ENCODE measurements at regions of chr1 and their contacts with region 1.

Region 1: GRCh38 chr1:227999056-227999930 is 7.5 kb upstream of the WNT3A start:
- DNase-seq: peak; percentile 15 to 76 (median 62)
- ATAC-seq: peak; percentile 84 to 98 (median 88)
- H3K4me3 ChIP-seq: no peak overlapping the region
- H3K4me3 Mint-ChIP-seq: no peak overlapping the region
- H3K27ac ChIP-seq: no peak overlapping the region
- H3K27ac Mint-ChIP-seq: no peak overlapping the region
- H3K4me1 ChIP-seq: no peaks in the 10 kb centered on the region
- H3K4me1 Mint-ChIP-seq: peaks cover 0 to 1% (median under 1%) of the 10 kb centered on the region in 3 donors
- H3K27me3 ChIP-seq: peaks cover 0 to 47% of the 10 kb centered on the region in 2 experiments
- H3K27me3 Mint-ChIP-seq: peaks cover 23 to 47% of the 10 kb centered on the region in 2 donors

Region 2: DNA sequence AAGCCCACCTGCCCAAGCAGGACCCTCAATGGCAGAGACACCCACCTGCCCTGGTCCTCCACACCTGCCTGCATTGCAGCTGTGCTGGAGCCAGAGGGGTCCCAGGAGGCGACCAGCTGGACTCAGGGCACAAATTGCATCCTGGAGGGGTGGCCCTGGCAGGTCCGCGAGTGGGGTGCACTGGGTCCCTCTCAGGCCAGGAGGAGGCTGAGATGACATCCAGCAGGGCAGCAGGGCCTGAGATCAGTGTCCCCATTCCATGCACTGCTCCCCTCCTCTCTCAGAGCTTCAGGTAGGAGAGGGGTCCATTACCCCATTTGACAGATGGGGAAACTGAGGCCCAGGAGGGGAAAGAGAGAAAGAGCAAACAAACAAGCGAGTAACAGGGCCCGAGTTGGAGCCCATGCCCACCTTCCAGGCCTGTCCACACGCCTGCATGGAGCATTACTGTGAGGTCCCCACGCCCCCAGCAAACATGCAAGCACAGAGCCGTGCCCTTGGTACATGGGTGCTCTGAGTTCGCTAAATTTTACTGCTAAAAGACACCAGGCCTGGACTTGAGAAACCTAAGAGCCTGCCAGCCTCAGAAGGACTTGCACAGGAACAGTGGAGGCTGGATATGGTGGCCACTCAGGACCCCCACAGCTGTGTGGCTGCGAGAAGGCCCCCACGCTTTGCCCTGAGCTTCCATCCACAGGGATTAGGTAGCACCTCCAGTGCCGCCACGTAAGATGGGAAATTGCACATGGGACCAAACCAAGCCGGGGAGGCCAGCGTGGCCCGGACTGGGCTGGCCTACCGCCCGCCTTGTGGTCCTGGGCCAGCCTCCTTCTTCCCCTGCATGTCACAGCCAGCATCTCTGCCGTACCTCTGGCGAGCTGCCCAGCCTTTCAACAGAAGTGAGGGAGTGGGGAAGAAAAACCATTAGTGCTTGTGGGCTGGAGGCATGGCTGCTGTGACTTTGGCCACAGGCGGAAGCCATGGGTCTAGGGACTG is 14.9 kb after region 1 on chr1:
- CTCF ChIA-PET with region 1: no interaction called
- POLR2A ChIA-PET with region 1: no interaction called
- DNase-seq: peak in 3 of 35 experiments; percentile 3 to 13 (median 7)
- ATAC-seq: no peak
- H3K4me3 ChIP-seq: no peak overlapping the region
- H3K4me3 Mint-ChIP-seq: no peak overlapping the region
- H3K27ac ChIP-seq: no peak overlapping the region
- H3K27ac Mint-ChIP-seq: no peak overlapping the region
- H3K4me1 ChIP-seq: peaks cover 0 to 6% of the 10 kb centered on the region in 2 experiments
- H3K4me1 Mint-ChIP-seq: peaks cover 0 to 10% (median under 1%) of the 10 kb centered on the region in 3 donors
- H3K27me3 ChIP-seq: peaks cover 0 to 49% of the 10 kb centered on the region in 2 experiments
- H3K27me3 Mint-ChIP-seq: peaks cover 20 to 27% of the 10 kb centered on the region in 2 donors

Region 3: GRCh38 chr1:228136901-228137300 is 137.6 kb after region 1 on chr1:
- CTCF ChIA-PET with region 1: no interaction called
- POLR2A ChIA-PET with region 1: no interaction called
- DNase-seq: peak in 2 of 35 experiments; percentile 26 to 61
- ATAC-seq: no peak
- H3K4me3 ChIP-seq: no peak overlapping the region
- H3K4me3 Mint-ChIP-seq: no peak overlapping the region
- H3K27ac ChIP-seq: peak overlapping the region; percentile 52
- H3K27ac Mint-ChIP-seq: peak overlapping the region in 1 of 2 donors; percentile 22
- H3K4me1 ChIP-seq: peaks cover 7 to 33% of the 10 kb centered on the region in 2 experiments
- H3K4me1 Mint-ChIP-seq: peaks cover 12 to 22% (median 19%) of the 10 kb centered on the region in 3 donors
- H3K27me3 ChIP-seq: peaks cover 0 to 10% of the 10 kb centered on the region in 2 experiments
- H3K27me3 Mint-ChIP-seq: peaks cover 0 to 11% of the 10 kb centered on the region in 2 donors

Region 4: GRCh38 chr1:228417822-228418203 is 418.5 kb after region 1 on chr1:
- CTCF ChIA-PET with region 1: no interaction called
- POLR2A ChIA-PET with region 1: no interaction called
- DNase-seq: no peak
- ATAC-seq: no peak
- H3K4me3 ChIP-seq: no peak overlapping the region
- H3K4me3 Mint-ChIP-seq: peak overlapping the region in 1 of 3 donors; percentile 81
- H3K27ac ChIP-seq: no peak overlapping the region
- H3K27ac Mint-ChIP-seq: no peak overlapping the region
- H3K4me1 ChIP-seq: peaks cover 5 to 19% of the 10 kb centered on the region in 2 experiments
- H3K4me1 Mint-ChIP-seq: peaks cover 18 to 24% (median 24%) of the 10 kb centered on the region in 3 donors
- H3K27me3 ChIP-seq: peaks cover 6 to 24% of the 10 kb centered on the region in 2 experiments
- H3K27me3 Mint-ChIP-seq: peaks cover 12% of the 10 kb centered on the region in 2 donors

Region 5: DNA sequence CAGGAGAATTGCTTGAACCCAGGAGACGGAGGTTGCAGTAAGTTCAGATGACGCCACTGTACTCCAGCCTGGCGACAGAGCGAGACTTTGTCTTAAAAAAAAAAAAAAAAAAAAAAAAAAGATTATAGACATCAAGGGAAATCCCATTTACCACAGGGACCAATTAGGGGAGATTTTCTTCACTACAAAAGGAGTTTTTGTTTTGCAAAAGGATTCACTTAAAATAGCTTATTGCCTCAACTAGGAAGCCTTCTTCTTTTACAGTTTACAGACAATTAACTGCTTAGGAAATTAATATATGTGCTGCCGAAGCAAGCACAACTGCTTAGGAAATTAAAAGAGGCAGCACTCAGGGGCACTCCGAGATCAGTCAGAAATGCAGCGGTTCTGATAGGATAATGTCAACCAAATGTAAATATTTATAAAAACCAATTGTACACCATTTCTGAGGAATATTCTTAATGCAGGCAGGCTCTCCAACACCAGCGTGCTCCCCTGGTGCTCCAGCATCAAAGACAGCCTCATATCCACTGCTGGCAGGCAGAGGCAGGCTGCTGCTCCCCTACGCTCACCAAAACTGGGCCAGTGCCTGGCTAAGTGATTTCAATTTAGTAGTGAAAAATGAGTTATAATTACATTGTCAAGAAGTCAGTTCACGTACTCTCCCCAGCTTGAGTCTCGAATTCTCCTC is 1163.7 kb after region 1 on chr1:
- CTCF ChIA-PET with region 1: interaction called in 1 of 2 experiments, 10 read pairs
- POLR2A ChIA-PET with region 1: no interaction called
- DNase-seq: no peak
- ATAC-seq: no peak
- H3K4me3 ChIP-seq: no peak overlapping the region
- H3K4me3 Mint-ChIP-seq: no peak overlapping the region
- H3K27ac ChIP-seq: no peak overlapping the region
- H3K27ac Mint-ChIP-seq: no peak overlapping the region
- H3K4me1 ChIP-seq: no peaks in the 10 kb centered on the region
- H3K4me1 Mint-ChIP-seq: peaks cover 0 to 7% (median 0%) of the 10 kb centered on the region in 3 donors
- H3K27me3 ChIP-seq: no peaks in the 10 kb centered on the region
- H3K27me3 Mint-ChIP-seq: peaks cover 0 to 4% of the 10 kb centered on the region in 2 donors